CD4-positive, alpha-beta memory T cell (primary cell): ENCODE measurements at regions of chr1 and their contacts with region 1.

Region 1: GRCh38 chr1:228664399-228664914 is 70.8 kb upstream of the RHOU start:
- DNase-seq: peak; percentile 66 to 74 (median 73)
- H3K4me3 ChIP-seq: no peak overlapping the region
- H3K4me3 Mint-ChIP-seq: no peak overlapping the region
- H3K27ac ChIP-seq: no peak overlapping the region
- H3K27ac Mint-ChIP-seq: no peak overlapping the region
- H3K4me1 ChIP-seq: no peaks in the 10 kb centered on the region
- H3K4me1 Mint-ChIP-seq: no peaks in the 10 kb centered on the region
- H3K27me3 ChIP-seq: no peaks in the 10 kb centered on the region
- H3K27me3 Mint-ChIP-seq: peaks cover 5 to 7% of the 10 kb centered on the region in 2 donors

Region 2: GRCh38 chr1:228650147-228650546 is 14.3 kb before region 1 on chr1:
- CTCF ChIA-PET with region 1: interaction called, 11 read pairs
- POLR2A ChIA-PET with region 1: no interaction called
- intact Hi-C with region 1: no loop called
- DNase-seq: no peak
- H3K4me3 ChIP-seq: no peak overlapping the region
- H3K4me3 Mint-ChIP-seq: no peak overlapping the region
- H3K27ac ChIP-seq: no peak overlapping the region
- H3K27ac Mint-ChIP-seq: no peak overlapping the region
- H3K4me1 ChIP-seq: peaks cover 26% of the 10 kb centered on the region
- H3K4me1 Mint-ChIP-seq: peaks cover 13 to 34% (median 22%) of the 10 kb centered on the region in 4 donors
- H3K27me3 ChIP-seq: peaks cover 57% of the 10 kb centered on the region
- H3K27me3 Mint-ChIP-seq: peaks cover 44% of the 10 kb centered on the region in 2 donors

Region 3: DNA sequence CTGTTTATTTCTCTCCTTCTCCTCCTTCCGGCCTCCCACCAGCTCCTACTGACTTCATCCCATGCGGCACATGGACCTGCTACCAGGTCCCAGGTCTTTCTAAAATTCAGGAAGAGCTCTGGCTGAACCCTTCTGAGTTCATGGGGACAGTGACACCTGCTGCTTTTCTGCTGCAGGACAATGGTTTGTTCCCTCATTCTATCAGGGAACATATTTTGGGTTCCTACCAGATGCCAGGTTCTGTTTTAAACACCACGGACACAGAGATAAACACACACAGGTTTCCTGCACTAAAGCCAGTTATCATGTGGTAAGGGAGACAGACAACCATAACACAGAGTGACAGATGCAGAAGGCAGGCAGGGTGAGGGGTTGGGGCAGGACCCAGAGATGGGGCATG is 492.4 kb after region 1 on chr1:
- CTCF ChIA-PET with region 1: interaction called, 4 read pairs
- POLR2A ChIA-PET with region 1: no interaction called
- intact Hi-C with region 1: loop called (anchors 2 kb)
- DNase-seq: no peak
- H3K4me3 ChIP-seq: no peak overlapping the region
- H3K4me3 Mint-ChIP-seq: peak overlapping the region in 3 of 8 donors; percentile 25 to 40 (median 31)
- H3K27ac ChIP-seq: no peak overlapping the region
- H3K27ac Mint-ChIP-seq: peak overlapping the region in 3 of 7 donors; percentile 36 to 81 (median 55)
- H3K4me1 ChIP-seq: peaks cover 27% of the 10 kb centered on the region
- H3K4me1 Mint-ChIP-seq: peaks cover 16 to 41% (median 34%) of the 10 kb centered on the region in 4 donors
- H3K27me3 ChIP-seq: no peaks in the 10 kb centered on the region
- H3K27me3 Mint-ChIP-seq: no peaks in the 10 kb centered on the region

Region 4: GRCh38 chr1:229227298-229227919 is 563.0 kb after region 1 on chr1:
- CTCF ChIA-PET with region 1: interaction called, 96 read pairs
- POLR2A ChIA-PET with region 1: interaction called, 3 read pairs
- intact Hi-C with region 1: loop called (anchors 1 kb)
- DNase-seq: peak; percentile 73 to 81 (median 80)
- H3K4me3 ChIP-seq: no peak overlapping the region
- H3K4me3 Mint-ChIP-seq: peak overlapping the region in 2 of 8 donors; percentile 12 to 53
- H3K27ac ChIP-seq: no peak overlapping the region
- H3K27ac Mint-ChIP-seq: peak overlapping the region in 1 of 7 donors; percentile 11
- H3K4me1 ChIP-seq: peaks cover 10% of the 10 kb centered on the region
- H3K4me1 Mint-ChIP-seq: peaks cover 6 to 16% (median 10%) of the 10 kb centered on the region in 4 donors
- H3K27me3 ChIP-seq: peaks cover 4% of the 10 kb centered on the region
- H3K27me3 Mint-ChIP-seq: no peaks in the 10 kb centered on the region

Region 5: DNA sequence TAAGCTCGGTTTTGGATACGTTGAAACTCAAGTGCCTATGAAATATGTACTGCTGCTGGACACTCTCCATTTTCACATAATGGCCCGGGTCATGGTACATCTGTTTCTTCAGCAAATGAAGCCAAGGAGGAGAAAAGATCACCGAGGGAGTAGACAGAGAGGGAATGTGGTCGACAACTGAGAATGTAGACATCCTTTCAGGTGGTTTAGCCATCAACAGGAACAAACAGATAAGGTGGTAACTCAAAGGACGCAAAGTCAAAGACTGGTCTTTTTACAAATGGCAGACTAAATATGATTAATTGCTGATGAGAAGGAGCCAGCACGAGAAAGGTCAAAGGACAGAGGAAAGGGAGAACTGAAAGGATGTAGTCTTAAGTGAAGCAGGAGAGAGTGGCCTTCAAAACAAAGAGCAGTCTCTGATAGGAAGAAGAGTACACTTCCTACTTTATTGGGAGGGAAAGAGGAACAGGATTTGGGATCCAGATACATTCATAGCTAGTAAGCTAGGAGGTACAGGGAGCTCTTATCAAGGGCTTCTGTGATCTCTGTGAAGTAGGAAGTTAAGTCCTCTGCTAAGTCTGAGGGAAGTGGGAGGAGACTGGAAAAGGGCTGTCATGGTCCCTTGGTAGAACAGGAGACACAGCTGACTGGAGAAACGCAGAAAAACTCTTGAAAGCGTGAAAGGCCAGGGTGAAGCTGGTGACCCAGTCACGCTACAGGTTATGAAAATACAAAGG is 815.4 kb after region 1 on chr1:
- CTCF ChIA-PET with region 1: interaction called, 18 read pairs
- POLR2A ChIA-PET with region 1: no interaction called
- intact Hi-C with region 1: loop called (anchors 1 kb)
- DNase-seq: no peak
- H3K4me3 ChIP-seq: no peak overlapping the region
- H3K4me3 Mint-ChIP-seq: no peak overlapping the region
- H3K27ac ChIP-seq: no peak overlapping the region
- H3K27ac Mint-ChIP-seq: peak overlapping the region in 3 of 7 donors; percentile 20 to 49 (median 48)
- H3K4me1 ChIP-seq: no peaks in the 10 kb centered on the region
- H3K4me1 Mint-ChIP-seq: peaks cover 5 to 13% (median 8%) of the 10 kb centered on the region in 4 donors
- H3K27me3 ChIP-seq: no peaks in the 10 kb centered on the region
- H3K27me3 Mint-ChIP-seq: no peaks in the 10 kb centered on the region

Region 6: GRCh38 chr1:229514578-229515275 is 850.3 kb after region 1 on chr1:
- CTCF ChIA-PET with region 1: interaction called, 12 read pairs
- POLR2A ChIA-PET with region 1: no interaction called
- intact Hi-C with region 1: loop called (anchors 1 kb)
- DNase-seq: peak; percentile 67 to 72 (median 69)
- H3K4me3 ChIP-seq: no peak overlapping the region
- H3K4me3 Mint-ChIP-seq: no peak overlapping the region
- H3K27ac ChIP-seq: no peak overlapping the region
- H3K27ac Mint-ChIP-seq: peak overlapping the region in 5 of 7 donors; percentile 18 to 62 (median 36)
- H3K4me1 ChIP-seq: no peaks in the 10 kb centered on the region
- H3K4me1 Mint-ChIP-seq: peaks cover 2 to 8% (median 6%) of the 10 kb centered on the region in 4 donors
- H3K27me3 ChIP-seq: no peaks in the 10 kb centered on the region
- H3K27me3 Mint-ChIP-seq: no peaks in the 10 kb centered on the region